ENCODE measurements at regions of chr3 and their contacts with region 1.

Region 1: GRCh38 chr3:42096796-42097565 is 5.8 kb downstream of the TRAK1 start:
- DNase-seq: no peak
- H3K4me3 ChIP-seq: no peak overlapping the region
- H3K27ac ChIP-seq: no peak overlapping the region
- H3K4me1 ChIP-seq: peaks cover 31% of the 10 kb centered on the region
- CTCF ChIP-seq: no peak

Region 2: GRCh38 chr3:41893977-41894376 is 203.0 kb before region 1 on chr3:
- CTCF ChIA-PET with region 1: no interaction called
- POLR2A ChIA-PET with region 1: interaction called, 3 read pairs
- intact Hi-C with region 1: loop called (anchors 1 kb)
- DNase-seq: peak; percentile 38
- H3K4me3 ChIP-seq: no peak overlapping the region
- H3K27ac ChIP-seq: no peak overlapping the region
- H3K4me1 ChIP-seq: peaks cover 9% of the 10 kb centered on the region
- CTCF ChIP-seq: peak; percentile 88

Region 3: GRCh38 chr3:41961750-41962679 is 135.0 kb before region 1 on chr3 and contains the start of gene ULK4:
- CTCF ChIA-PET with region 1: no interaction called
- POLR2A ChIA-PET with region 1: interaction called, 3 read pairs
- intact Hi-C with region 1: loop called (anchors 5 kb)
- DNase-seq: peak; percentile 100
- H3K4me3 ChIP-seq: peak within 1 kb of the TSS; percentile 93
- H3K27ac ChIP-seq: peak within 1 kb of the TSS; percentile 68
- H3K4me1 ChIP-seq: peaks cover 12% of the 10 kb centered on the region
- CTCF ChIP-seq: no peak
- total RNA-seq, gene ULK4: 21.0 and 39.3 TPM in 2 replicates

Region 4: DNA sequence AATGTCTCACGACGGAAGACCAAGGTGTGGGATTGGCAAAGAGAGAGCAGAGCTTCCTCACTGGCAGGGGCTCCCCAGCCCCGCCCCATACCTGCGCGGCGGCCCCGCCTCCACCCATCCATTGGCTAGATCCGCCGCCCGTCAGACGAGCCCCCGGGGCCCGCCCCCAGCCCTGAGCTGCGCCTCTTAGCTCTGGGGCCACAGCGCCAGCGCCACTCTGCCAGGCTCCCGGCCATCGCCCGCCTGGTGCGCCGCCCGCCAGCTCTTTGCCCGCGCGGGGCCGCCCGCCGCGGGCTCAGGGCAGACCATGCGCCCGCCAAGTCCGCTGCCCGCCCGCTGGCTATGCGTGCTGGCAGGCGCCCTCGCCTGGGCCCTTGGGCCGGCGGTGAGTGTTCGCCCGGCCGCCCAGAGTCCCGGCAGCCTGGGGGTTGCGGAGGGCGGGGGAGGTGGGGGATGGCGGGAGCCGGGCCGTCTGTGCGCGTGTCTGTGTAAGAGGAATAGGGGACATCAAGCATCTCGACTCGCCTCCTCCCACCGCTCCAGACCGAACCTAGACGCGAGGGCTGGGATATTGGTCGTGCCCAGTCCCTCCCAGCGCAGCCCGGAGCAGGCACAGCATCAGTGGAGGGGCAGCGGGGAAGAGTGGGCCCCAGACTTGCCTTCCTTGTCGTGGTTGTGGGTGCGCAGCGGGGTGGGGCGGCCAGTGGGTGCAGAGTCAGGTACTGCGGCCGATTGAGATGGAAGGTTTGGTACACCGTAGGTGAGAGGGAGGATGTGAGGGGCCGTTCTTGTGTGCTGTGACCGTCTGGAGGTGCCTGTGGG is 405.7 kb after region 1 on chr3 and contains the start of gene VIPR1:
- CTCF ChIA-PET with region 1: no interaction called
- POLR2A ChIA-PET with region 1: no interaction called
- intact Hi-C with region 1: no loop called
- DNase-seq: peak; percentile 79
- H3K4me3 ChIP-seq: peak within 1 kb of the TSS; percentile 63
- H3K27ac ChIP-seq: no peak within 1 kb of the TSS
- H3K4me1 ChIP-seq: peaks cover 15% of the 10 kb centered on the region
- CTCF ChIP-seq: no peak
- total RNA-seq, gene VIPR1: 0.21 TPM in 1 of 2 replicates, not detected in the other